Spleen (tissue), 13 donors: ENCODE measurements at regions of chr14 and their contacts with region 1.

Region 1: DNA sequence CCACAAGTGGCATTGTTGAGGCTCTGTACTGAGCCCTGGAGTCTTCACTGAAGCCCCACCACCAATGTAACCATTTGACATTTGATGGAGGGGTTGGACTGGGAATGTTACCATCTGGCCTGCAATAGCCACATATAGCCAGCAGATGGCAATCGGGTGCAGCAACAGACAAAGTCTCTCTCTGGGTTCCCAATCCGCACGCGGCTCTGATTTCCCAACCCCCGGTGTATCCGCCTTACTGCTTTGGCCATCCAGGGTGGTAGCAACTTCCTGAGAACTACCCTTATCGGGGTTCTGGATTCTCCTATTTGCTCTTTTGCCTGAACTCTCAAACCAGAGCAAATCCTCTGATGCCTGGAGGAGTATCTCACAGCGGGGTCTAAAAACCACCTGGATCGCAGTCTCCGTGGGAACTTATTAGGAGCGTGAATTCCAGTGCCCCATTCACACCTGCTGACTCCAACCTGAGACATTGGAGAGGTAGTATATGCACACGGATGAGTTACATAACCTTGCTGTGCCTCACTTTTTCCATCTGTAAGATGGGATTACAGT is 14.2 kb downstream of the VRTN start:
- DNase-seq: peak; percentile 87
- H3K4me3 ChIP-seq: no peak overlapping the region
- H3K27ac ChIP-seq: no peak overlapping the region
- H3K4me1 ChIP-seq: peaks cover 0 to 7% (median 4%) of the 10 kb centered on the region in 6 donors
- H3K27me3 ChIP-seq: peaks cover 0 to 21% (median 0%) of the 10 kb centered on the region in 7 donors
- CTCF ChIP-seq: peak; percentile 86 to 95 (median 93)
- POLR2A ChIP-seq: no peak

Region 2: GRCh38 chr14:74478996-74479635 is 116.7 kb after region 1 on chr14:
- intact Hi-C with region 1: loop called (anchors 5 kb)
- DNase-seq: no peak
- H3K4me3 ChIP-seq: no peak overlapping the region
- H3K27ac ChIP-seq: no peak overlapping the region
- H3K4me1 ChIP-seq: no peaks in the 10 kb centered on the region
- H3K27me3 ChIP-seq: no peaks in the 10 kb centered on the region
- CTCF ChIP-seq: peak in 8 of 11 experiments; percentile 12 to 59 (median 38)
- POLR2A ChIP-seq: no peak

Region 3: DNA sequence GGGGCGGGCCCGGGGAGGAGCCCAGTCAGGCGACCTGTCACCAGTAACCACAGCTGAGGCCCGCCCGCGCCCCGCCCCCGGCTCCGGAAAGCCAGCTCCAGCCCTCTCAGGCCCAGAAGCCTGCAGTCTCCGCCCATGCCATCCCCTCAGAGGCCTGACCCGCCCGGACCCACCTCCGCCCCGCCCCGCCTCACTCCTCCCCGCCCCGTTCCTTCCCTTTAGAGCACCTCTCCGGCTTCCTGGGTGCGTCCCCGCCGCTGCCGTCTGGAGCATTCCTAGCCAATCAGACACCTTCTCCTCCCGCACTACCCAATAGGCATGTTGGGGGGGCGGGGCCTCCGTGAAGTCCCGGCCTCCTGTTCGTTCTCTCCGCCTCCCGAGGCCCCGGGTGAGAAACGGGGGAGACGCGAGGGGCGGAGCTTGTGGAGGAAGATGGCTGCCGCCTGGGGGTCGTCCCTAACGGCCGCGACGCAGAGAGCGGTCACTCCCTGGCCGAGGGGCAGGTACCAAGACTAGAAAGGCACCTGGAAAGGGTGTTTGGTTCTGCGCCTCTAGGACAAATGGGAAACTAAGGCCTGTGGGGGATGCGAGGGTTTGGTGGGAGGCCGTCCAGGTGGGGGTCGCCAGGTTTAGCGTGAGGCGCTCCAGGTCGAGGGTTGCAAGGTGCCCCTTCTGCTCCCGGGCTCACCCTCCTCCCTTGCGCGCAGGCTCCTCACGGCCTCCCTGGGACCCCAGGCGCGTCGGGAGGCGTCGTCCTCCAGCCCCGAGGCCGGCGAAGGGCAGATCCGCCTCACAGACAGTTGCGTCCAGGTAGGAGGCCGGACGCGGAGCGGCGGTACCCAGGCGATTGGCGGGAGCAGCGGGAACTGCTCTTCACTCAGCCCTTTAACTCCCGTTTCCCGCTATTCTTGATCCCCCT is 131.2 kb after region 1 on chr14 and contains the start of gene ISCA2:
- intact Hi-C with region 1: loop called (anchors 5 kb)
- DNase-seq: peak; percentile 100
- H3K4me3 ChIP-seq: peak within 1 kb of the TSS; percentile 74 to 94 (median 90)
- H3K27ac ChIP-seq: peak within 1 kb of the TSS; percentile 85 to 96 (median 96)
- H3K4me1 ChIP-seq: peaks cover 36 to 63% (median 51%) of the 10 kb centered on the region in 6 donors
- H3K27me3 ChIP-seq: no peaks in the 10 kb centered on the region
- CTCF ChIP-seq: peak in 2 of 11 experiments; percentile 13 to 19
- POLR2A ChIP-seq: no peak
- total RNA-seq, gene ISCA2: 11.7 to 24.7 (median 19.0) TPM